Naive thymus-derived CD4-positive, alpha-beta T cell (primary cell): ENCODE measurements at regions of chr1 and their contacts with region 1.

Region 1: DNA sequence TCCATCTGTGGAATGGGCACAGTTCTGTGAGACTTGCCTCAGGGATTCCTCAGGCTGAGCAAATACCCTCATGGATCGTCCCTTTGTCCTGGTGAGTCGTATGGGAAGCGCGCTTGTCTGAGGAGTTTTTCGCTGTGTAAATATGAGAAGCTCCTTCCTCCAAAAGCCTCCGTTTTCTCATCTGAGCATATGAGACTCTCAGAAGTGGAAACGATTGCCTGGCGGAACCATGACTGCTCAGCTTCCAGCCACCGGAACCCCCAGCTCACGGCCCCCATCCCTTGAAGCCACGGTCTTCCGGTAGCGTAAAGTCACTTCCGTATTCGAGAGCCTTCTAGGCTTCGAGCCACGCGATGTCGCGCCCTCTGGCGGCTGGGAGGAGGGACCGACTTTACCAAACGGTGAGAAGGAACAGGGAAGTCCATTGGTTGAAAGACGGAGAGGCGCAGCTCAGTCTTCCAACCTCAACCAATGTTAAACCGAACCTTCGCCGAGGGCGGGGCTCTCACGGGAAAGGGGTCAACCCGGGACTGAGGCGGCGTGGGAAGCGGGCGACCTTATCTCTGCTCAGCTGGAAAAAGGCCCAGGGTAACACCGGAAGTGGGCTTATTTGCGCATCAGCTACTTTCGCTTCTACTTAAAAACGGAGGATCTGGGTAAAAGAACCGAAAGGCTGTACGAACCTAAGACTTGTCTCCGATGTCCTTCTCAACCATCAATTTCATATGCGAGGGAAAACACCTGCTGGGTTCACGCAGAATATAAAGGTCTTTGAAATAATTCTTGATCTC is 46.2 kb downstream of the AZIN2 start:
- DNase-seq: peak; percentile 93 to 99 (median 98)
- ATAC-seq: peak; percentile 95
- H3K4me3 ChIP-seq: peak overlapping the region; percentile 95
- H3K4me3 Mint-ChIP-seq: peak overlapping the region; percentile 87 to 99 (median 93)
- H3K27ac ChIP-seq: peak overlapping the region; percentile 88
- H3K27ac Mint-ChIP-seq: peak overlapping the region; percentile 91 to 99 (median 96)
- H3K4me1 ChIP-seq: peaks cover 19 to 28% of the 10 kb centered on the region in 2 donors
- H3K4me1 Mint-ChIP-seq: peaks cover 24 to 60% (median 52%) of the 10 kb centered on the region in 7 donors
- H3K27me3 ChIP-seq: no peaks in the 10 kb centered on the region
- H3K27me3 Mint-ChIP-seq: peaks cover 0 to 3% (median 0%) of the 10 kb centered on the region in 5 donors

Region 2: DNA sequence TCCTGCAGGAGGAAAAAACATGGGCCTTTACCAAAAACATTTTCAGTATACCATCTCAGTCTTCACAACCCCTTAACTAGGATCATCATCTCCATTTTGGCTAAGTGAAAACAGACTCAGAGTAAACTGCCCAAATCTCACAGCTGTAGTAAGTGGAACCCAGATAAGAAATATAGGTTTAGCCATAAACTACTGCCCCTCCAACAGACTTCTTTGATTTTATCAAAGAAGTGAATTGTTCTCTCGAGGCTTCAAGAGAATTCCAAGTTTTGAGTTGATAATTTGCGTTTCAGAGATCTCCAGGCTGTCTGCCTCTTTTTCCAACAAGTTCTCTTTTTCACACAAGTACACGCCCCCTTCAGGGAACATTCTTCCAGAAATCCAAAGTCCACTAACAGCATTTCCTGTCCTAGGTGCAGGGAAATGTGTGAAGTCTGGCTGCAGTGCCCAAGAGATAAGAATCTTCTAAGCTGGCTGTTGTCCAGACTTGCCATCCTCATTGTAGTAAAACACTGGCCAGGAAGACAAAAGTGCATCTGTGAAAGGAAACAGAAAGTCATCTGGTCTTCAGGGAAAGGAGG is 193.4 kb before region 1 on chr1:
- CTCF ChIA-PET with region 1: no interaction called
- POLR2A ChIA-PET with region 1: interaction called, 3 read pairs
- intact Hi-C with region 1: loop called in 1 of 2 experiments (anchors 2 kb)
- DNase-seq: peak in 1 of 9 donors; percentile 5
- ATAC-seq: no peak
- H3K4me3 ChIP-seq: no peak overlapping the region
- H3K4me3 Mint-ChIP-seq: no peak overlapping the region
- H3K27ac ChIP-seq: no peak overlapping the region
- H3K27ac Mint-ChIP-seq: no peak overlapping the region
- H3K4me1 ChIP-seq: no peaks in the 10 kb centered on the region
- H3K4me1 Mint-ChIP-seq: peaks cover 0 to 35% (median 0%) of the 10 kb centered on the region in 7 donors
- H3K27me3 ChIP-seq: no peaks in the 10 kb centered on the region
- H3K27me3 Mint-ChIP-seq: no peaks in the 10 kb centered on the region

Region 3: DNA sequence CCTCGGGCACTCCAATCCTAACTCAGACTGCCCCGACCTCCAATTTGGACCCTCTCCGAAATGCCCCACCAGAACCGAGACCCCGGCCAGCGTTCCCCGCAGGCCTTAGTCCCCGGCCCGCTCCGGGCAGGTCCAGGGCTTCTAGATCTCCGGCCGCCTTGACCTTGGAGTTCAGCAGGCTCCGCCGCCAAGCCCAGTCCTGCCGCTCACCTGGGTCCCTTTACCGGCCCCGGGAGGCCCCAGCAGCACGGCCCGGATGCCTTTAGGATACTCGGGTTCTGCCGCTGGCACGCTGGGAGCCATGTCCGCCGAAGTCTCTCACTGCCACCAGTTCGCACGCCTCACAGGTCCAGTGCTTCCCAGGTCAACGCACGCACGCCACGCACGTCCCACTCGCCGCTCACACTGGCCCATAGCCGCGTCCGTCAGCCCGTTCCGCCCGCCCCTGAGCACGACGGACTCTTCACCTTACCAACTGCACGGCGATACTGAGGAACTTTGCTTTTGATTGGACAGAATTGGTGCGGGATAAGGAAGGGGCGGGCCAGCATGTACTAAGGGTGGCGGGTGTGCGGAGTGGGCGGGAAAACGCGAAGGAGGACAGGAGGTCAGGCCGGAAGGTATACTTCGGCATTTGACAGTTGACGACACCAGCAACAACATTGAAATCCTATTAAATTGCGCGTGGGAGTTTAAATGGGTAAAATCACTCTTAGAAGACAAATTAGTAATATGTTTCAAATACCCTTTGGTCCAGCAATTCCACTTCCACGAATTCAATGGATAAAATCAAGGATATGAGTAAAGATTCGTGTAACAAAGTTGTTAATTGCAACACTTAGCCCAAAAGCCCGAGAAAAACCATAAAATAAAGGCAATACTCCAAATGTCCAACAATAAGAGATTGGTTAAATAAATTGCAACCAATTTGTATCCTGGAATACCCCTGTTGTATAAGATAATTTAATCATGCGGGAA is 90.4 kb before region 1 on chr1 and contains the start of gene AK2:
- CTCF ChIA-PET with region 1: no interaction called
- POLR2A ChIA-PET with region 1: interaction called, 4 read pairs
- intact Hi-C with region 1: loop called (anchors 1 to 2 kb)
- DNase-seq: peak; percentile 63 to 91 (median 84)
- ATAC-seq: peak; percentile 100
- H3K4me3 ChIP-seq: peak within 1 kb of the TSS; percentile 70
- H3K4me3 Mint-ChIP-seq: peak within 1 kb of the TSS; percentile 92 to 99 (median 96)
- H3K27ac ChIP-seq: peak within 1 kb of the TSS; percentile 73
- H3K27ac Mint-ChIP-seq: peak within 1 kb of the TSS; percentile 74 to 96 (median 89)
- H3K4me1 ChIP-seq: peaks cover 11 to 24% of the 10 kb centered on the region in 2 donors
- H3K4me1 Mint-ChIP-seq: peaks cover 35 to 50% (median 46%) of the 10 kb centered on the region in 7 donors
- H3K27me3 ChIP-seq: no peaks in the 10 kb centered on the region
- H3K27me3 Mint-ChIP-seq: peaks cover 0 to 1% (median 0%) of the 10 kb centered on the region in 5 donors
- total RNA-seq, gene AK2: 53.8 to 219 (median 90.2) TPM

Region 4: DNA sequence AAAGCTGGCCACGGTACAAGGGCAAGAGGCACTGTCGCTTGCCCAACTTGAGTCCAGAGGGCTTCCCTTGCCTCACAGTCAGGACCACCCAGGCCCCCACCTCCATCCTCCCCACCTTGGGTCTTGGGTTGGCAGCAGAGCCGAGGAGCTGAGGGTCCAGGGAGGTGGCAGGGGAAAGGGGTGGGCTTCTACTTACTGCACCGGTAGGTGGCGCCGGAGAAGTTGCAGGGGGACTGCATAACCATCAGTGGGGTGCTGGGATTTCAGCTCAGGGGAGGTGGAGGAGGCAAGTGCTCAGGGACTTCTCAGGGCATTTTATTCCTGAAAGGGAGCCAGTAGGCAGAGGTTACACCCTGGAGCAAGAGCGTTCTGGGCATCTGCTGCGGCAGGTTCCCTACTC is 10.6 kb after region 1 on chr1:
- CTCF ChIA-PET with region 1: interaction called, 8 read pairs
- POLR2A ChIA-PET with region 1: interaction called, 16 read pairs
- intact Hi-C with region 1: no loop called
- DNase-seq: peak in 5 of 9 donors; percentile 9 to 31 (median 22)
- ATAC-seq: peak; percentile 50
- H3K4me3 ChIP-seq: no peak overlapping the region
- H3K4me3 Mint-ChIP-seq: no peak overlapping the region
- H3K27ac ChIP-seq: no peak overlapping the region
- H3K27ac Mint-ChIP-seq: no peak overlapping the region
- H3K4me1 ChIP-seq: no peaks in the 10 kb centered on the region
- H3K4me1 Mint-ChIP-seq: peaks cover 8 to 23% (median 15%) of the 10 kb centered on the region in 7 donors
- H3K27me3 ChIP-seq: no peaks in the 10 kb centered on the region
- H3K27me3 Mint-ChIP-seq: no peaks in the 10 kb centered on the region

Region 5: DNA sequence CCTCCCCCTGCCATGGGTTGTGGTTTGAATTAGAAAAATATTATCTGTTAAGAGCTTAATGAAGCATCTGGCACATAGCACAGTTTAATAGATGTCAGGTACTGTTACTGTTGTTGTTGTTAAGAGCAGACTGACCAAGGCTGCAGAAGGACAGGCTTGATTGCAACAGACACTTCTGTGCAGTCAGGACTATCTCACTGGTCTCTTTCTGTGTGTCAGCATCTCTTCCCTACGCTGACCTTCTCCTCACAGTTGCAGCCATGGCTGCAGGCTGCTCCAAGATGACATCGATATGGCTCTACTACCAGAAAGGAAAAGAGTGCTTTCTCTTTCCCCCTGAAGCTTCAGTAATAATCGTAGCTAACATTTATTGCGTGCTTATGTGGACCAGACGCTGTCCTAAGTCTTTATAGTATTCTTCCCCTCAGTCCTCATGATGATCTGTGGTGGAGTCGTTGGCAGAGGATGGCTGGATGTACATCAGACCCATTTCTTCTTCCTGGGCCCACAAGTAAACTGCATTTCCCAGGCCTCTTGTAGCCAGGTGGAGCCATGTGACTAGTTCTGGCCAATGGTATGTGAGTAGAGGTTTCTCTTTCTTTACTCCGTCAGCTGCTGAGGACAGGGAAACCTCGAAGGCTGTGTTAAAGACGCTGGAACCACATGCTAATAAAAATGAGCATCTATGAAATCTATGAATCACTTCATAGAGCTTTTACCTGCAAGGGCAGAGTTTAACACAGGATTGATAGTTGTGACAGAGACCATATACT is 110.2 kb after region 1 on chr1:
- CTCF ChIA-PET with region 1: no interaction called
- POLR2A ChIA-PET with region 1: no interaction called
- intact Hi-C with region 1: loop called in 1 of 2 experiments (anchors 1 kb)
- DNase-seq: peak in 7 of 9 donors; percentile 38 to 62 (median 47)
- ATAC-seq: peak; percentile 93
- H3K4me3 ChIP-seq: no peak overlapping the region
- H3K4me3 Mint-ChIP-seq: peak overlapping the region in 7 of 10 donors; percentile 16 to 66 (median 46)
- H3K27ac ChIP-seq: no peak overlapping the region
- H3K27ac Mint-ChIP-seq: peak overlapping the region in 3 of 9 donors; percentile 33 to 76 (median 42)
- H3K4me1 ChIP-seq: no peaks in the 10 kb centered on the region
- H3K4me1 Mint-ChIP-seq: peaks cover 0 to 6% (median 6%) of the 10 kb centered on the region in 7 donors
- H3K27me3 ChIP-seq: no peaks in the 10 kb centered on the region
- H3K27me3 Mint-ChIP-seq: peaks cover 0 to 14% (median 7%) of the 10 kb centered on the region in 5 donors

Region 6: DNA sequence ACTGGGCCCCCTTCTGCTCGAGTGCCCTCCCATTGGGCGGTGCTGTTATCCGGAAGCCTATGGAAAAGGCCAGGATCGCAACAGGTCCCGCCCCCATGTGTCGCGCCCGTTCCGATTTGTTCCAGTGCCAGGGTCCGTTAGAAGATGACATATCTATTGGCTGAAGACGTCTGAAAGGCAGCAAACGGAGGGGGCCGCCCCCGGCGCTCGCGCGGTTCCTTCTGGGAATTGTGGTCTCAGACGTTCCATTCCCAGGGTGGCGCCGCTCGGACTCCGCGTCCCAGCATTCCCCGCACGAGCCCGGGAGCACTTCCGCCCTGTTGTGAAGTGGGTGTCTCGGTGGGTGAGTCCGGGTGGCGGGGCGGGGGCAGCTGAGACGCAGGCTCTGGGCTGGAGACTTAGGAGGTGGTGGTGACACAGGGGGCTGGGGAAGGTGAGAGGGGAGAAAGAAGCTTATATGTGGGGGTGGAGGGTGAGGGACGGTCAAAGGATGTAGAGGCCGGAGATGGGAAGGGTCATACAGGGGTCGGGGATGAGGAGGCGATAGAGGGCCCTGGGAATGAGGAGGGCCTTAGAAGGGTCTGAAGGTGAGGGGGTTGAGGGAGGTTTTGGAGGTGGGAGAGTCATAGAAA is 345.3 kb after region 1 on chr1 and contains the start of gene ZSCAN20:
- CTCF ChIA-PET with region 1: no interaction called
- POLR2A ChIA-PET with region 1: no interaction called
- intact Hi-C with region 1: loop called (anchors 1 to 5 kb)
- DNase-seq: peak; percentile 58 to 82 (median 79)
- ATAC-seq: peak; percentile 96
- H3K4me3 ChIP-seq: peak within 1 kb of the TSS; percentile 47
- H3K4me3 Mint-ChIP-seq: peak within 1 kb of the TSS; percentile 84 to 98 (median 92)
- H3K27ac ChIP-seq: peak within 1 kb of the TSS; percentile 60
- H3K27ac Mint-ChIP-seq: peak within 1 kb of the TSS; percentile 37 to 95 (median 76)
- H3K4me1 ChIP-seq: peaks cover 11 to 14% of the 10 kb centered on the region in 2 donors
- H3K4me1 Mint-ChIP-seq: peaks cover 20 to 39% (median 30%) of the 10 kb centered on the region in 7 donors
- H3K27me3 ChIP-seq: no peaks in the 10 kb centered on the region
- H3K27me3 Mint-ChIP-seq: no peaks in the 10 kb centered on the region
- total RNA-seq, gene ZSCAN20: 0.77 to 3.0 (median 2.6) TPM